H1 (cell line): ENCODE measurements at regions of chr12 and their contacts with region 1.

Region 1: DNA sequence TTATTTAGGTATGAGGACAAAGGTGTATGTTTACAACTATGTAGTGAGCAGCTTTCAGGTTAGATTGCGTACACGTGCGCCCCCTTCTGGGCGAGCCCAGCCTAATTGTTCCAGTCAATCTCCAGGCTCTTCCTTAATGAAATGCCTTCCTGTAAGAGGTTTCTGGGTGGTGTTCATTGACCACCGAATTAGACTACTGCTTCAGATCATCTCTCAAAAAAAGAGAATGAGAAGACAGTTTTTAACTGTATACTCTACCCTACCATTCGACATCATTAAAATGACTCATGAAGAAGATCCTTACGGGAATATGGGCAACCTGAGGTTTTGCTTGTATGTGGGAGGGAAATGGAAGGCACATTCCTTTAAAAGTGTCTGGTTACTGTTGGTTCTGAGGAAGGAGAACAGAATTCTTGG is 2.1 kb downstream of the LUM start:
- DNase-seq: peak; percentile 69 to 90
- H3K4me3 ChIP-seq: no peak overlapping the region
- H3K27ac ChIP-seq: no peak overlapping the region
- H3K4me1 ChIP-seq: no peaks in the 10 kb centered on the region
- H3K27me3 ChIP-seq: no peaks in the 10 kb centered on the region
- CTCF ChIP-seq: peak; percentile 61 to 75 (median 64)
- EP300 ChIP-seq: no peak
- POLR2A ChIP-seq: no peak
- RAD21 ChIP-seq: peak; percentile 62 to 69

Region 2: DNA sequence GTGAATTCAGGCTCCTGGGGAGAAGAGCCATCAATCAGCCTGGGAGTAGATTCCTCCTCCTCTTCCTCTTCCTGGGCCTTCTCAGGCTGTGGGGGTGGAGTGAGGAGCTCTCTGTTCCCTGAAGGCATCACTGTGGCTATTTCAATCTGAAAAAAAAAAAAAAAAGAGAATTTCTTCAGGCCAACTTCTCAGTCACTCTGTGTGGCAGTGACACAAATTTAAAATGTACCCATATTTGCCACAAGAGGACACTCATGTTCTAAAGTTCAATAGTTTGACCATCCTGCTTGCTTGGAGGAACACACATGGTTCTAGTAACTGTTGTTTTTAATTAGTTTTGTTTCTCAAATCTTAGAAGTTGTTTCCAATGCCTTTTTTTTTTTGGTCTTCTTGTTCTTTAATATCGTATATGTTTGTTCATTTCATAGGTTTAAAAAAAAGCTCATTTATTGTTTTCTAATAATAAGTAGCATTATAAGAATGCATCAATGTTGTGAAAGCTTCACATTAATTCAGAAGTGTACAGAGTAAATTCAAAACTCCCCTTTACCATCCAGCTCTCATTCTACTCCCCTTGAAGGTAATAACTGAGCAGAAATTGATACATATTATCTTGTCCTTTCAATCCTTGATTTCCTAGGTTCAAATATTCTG is 130.9 kb before region 1 on chr12:
- CTCF ChIA-PET with region 1: interaction called, 17 read pairs
- POLR2A ChIA-PET with region 1: no interaction called
- DNase-seq: no peak
- H3K4me3 ChIP-seq: no peak overlapping the region
- H3K27ac ChIP-seq: no peak overlapping the region
- H3K4me1 ChIP-seq: peaks cover 0 to 2% (median 0%) of the 10 kb centered on the region in 4 experiments; a peak in 1 of 7 replicates
- H3K27me3 ChIP-seq: peaks cover 4 to 21% (median 9%) of the 10 kb centered on the region in 4 experiments
- CTCF ChIP-seq: peak in 2 of 3 experiments; percentile 54 to 65; a peak in 3 of 4 replicates
- EP300 ChIP-seq: no peak
- POLR2A ChIP-seq: no peak
- RAD21 ChIP-seq: peak; percentile 84

Region 3: DNA sequence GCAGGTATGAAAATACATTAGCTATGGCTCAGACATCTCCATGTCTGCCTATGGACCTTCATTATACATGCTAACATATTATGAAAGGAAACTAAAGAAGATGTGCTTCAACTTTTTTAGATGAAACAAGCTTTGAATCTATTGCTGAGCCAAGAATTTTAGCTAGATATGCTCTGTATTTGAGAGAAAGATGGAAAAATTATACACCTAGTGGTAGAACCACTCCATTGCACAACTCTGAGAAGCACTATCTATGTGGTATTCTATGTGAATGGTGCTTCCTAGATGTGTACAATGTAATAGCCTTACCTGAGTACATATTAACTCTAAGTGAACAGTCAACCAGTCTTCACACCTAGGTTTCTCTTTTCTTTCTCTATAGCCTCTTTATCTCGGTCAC is 121.6 kb before region 1 on chr12:
- CTCF ChIA-PET with region 1: interaction called, 29 read pairs
- POLR2A ChIA-PET with region 1: no interaction called
- DNase-seq: no peak
- H3K4me3 ChIP-seq: no peak overlapping the region
- H3K27ac ChIP-seq: no peak overlapping the region
- H3K4me1 ChIP-seq: peaks cover 0 to 14% (median 2%) of the 10 kb centered on the region in 4 experiments; a peak in 2 of 7 replicates
- H3K27me3 ChIP-seq: peaks cover 9 to 26% (median 18%) of the 10 kb centered on the region in 4 experiments; a peak in 6 of 7 replicates
- CTCF ChIP-seq: peak in 1 of 3 experiments; percentile 16; a peak in 1 of 4 replicates
- EP300 ChIP-seq: no peak
- POLR2A ChIP-seq: no peak
- RAD21 ChIP-seq: no peak

Region 4: DNA sequence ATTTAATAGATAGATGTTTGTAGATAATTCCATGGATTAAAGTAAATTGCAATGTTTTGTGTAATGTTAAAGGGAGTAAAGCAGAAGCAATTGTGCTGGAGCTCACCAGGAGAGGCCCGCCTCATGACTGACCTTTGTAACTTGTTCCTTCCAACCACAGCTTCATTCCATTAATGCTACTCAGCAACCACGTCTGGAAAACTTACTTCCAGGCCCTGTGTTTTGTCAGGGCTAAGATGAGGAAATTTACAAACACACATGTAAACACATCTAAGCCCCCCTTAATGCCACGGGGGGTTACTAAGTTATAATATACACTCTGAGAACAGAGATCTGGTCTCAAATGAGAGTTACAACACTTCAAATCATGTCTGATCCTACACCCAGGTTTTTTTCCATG is 10.2 kb before region 1 on chr12:
- CTCF ChIA-PET with region 1: interaction called, 21 read pairs
- POLR2A ChIA-PET with region 1: no interaction called
- DNase-seq: no peak
- H3K4me3 ChIP-seq: no peak overlapping the region
- H3K27ac ChIP-seq: no peak overlapping the region
- H3K4me1 ChIP-seq: no peaks in the 10 kb centered on the region
- H3K27me3 ChIP-seq: no peaks in the 10 kb centered on the region
- CTCF ChIP-seq: no peak
- EP300 ChIP-seq: no peak
- POLR2A ChIP-seq: no peak
- RAD21 ChIP-seq: no peak

Region 5: DNA sequence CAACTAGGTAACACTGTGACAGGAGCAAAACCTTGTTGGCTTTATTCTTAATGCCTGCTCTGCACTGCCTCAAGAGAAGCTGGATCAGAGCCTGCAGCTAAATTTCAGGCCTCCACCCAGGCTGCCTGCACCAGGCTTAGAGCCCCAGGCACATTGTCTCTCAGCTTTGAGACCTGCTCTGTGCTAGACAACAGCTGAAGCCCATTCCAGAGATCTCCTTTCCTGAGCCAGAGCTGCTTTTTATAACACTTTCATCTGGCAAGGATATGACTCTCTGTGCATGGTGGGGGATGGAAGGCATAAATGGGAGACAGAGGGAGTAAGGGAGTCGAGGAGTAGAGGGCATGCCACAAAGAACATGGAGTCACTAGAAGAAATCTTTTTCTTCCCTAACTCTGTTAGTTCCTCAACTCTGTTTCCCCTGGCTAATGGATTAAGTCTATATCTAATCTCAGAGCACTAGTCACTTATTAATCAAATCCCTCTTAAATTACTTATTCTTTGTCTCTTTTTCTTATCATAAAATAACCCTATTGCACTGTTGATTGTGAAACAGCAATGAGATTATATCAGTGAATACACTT is 29.3 kb after region 1 on chr12:
- CTCF ChIA-PET with region 1: interaction called, 10 read pairs
- POLR2A ChIA-PET with region 1: no interaction called
- DNase-seq: no peak
- H3K4me3 ChIP-seq: no peak overlapping the region
- H3K27ac ChIP-seq: no peak overlapping the region
- H3K4me1 ChIP-seq: no peaks in the 10 kb centered on the region
- H3K27me3 ChIP-seq: no peaks in the 10 kb centered on the region
- CTCF ChIP-seq: no peak
- EP300 ChIP-seq: no peak
- POLR2A ChIP-seq: no peak
- RAD21 ChIP-seq: no peak

Region 6: GRCh38 chr12:91355150-91356006 is 246.2 kb after region 1 on chr12:
- CTCF ChIA-PET with region 1: interaction called, 10 read pairs
- POLR2A ChIA-PET with region 1: no interaction called
- DNase-seq: peak; percentile 17 to 58
- H3K4me3 ChIP-seq: no peak overlapping the region
- H3K27ac ChIP-seq: no peak overlapping the region
- H3K4me1 ChIP-seq: no peaks in the 10 kb centered on the region
- H3K27me3 ChIP-seq: no peaks in the 10 kb centered on the region
- CTCF ChIP-seq: peak; percentile 73 to 88 (median 88)
- EP300 ChIP-seq: no peak
- POLR2A ChIP-seq: no peak
- RAD21 ChIP-seq: peak; percentile 94 to 96